ENCODE measurements at regions of chr6 and their contacts with region 1.

Region 1: GRCh38 chr6:158913620-158914019 is 86.4 kb downstream of the RSPH3 start:
- DNase-seq: no peak
- ATAC-seq: no peak
- H3K4me3 ChIP-seq: no peak overlapping the region
- H3K4me3 Mint-ChIP-seq: no peak overlapping the region
- H3K27ac ChIP-seq: no peak overlapping the region
- H3K27ac Mint-ChIP-seq: no peak overlapping the region
- H3K4me1 ChIP-seq: peaks cover 31 to 54% of the 10 kb centered on the region in 2 experiments
- H3K4me1 Mint-ChIP-seq: peaks cover 59 to 71% (median 65%) of the 10 kb centered on the region in 3 donors
- H3K27me3 ChIP-seq: no peaks in the 10 kb centered on the region
- H3K27me3 Mint-ChIP-seq: no peaks in the 10 kb centered on the region

Region 2: DNA sequence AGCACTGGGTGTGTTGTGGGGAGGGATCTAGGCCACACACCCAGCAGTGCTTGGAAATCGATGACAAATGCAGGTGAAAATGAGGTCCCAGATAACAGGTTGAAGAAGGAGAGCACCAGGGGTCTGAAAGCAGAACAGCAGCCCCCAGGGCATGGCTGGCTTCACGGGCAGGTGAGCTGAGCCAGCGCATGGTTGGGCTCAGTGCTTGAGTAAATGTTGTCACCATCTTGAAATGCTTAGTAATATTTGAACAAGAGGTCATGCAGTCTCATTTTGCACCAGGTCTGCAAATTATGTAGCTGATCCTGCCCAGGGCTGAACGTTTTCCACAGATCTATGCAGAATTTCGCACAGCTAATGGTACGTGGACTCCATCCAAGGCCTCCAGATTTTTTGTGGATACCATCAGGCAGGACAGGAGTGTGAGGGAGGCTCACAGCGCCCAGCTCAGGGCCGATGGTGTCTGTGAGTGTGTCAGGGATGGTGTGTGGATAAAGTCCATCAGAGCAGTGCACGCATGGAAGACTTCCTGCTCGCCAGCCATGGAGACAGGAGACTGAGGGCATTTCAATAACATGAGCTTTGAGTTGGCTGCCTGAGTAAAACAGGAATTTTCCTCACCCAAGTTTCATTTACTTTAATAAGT is 1143.7 kb before region 1 on chr6:
- CTCF ChIA-PET with region 1: interaction called in 1 of 2 experiments, 10 read pairs
- POLR2A ChIA-PET with region 1: no interaction called
- DNase-seq: no peak
- ATAC-seq: no peak
- H3K4me3 ChIP-seq: no peak overlapping the region
- H3K4me3 Mint-ChIP-seq: no peak overlapping the region
- H3K27ac ChIP-seq: no peak overlapping the region
- H3K27ac Mint-ChIP-seq: no peak overlapping the region
- H3K4me1 ChIP-seq: peaks cover 19 to 27% of the 10 kb centered on the region in 2 experiments
- H3K4me1 Mint-ChIP-seq: peaks cover 44 to 54% (median 53%) of the 10 kb centered on the region in 3 donors
- H3K27me3 ChIP-seq: peaks cover 0 to 13% of the 10 kb centered on the region in 2 experiments
- H3K27me3 Mint-ChIP-seq: peaks cover 0 to 9% of the 10 kb centered on the region in 2 donors

Region 3: DNA sequence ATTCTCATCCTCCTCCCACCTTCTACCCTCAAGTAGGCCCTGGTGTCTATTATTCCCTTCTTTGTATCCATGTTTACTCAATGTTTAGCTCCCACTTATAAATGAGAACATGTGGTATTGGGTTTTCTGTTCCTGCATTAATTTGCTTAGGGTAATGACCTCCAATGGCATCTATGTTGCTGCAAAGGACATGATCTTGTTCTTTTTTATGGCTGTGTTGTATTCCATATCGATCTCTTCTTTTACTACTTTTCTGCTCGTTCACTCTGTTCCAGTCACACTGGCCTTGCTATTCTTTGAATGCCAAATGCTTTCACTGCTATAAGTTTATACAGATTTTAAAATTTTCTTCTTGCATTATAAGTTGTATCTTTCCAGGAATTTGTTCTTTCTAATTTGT is 28.7 kb after region 1 on chr6:
- CTCF ChIA-PET with region 1: no interaction called
- POLR2A ChIA-PET with region 1: interaction called in 1 of 2 experiments, 12 read pairs
- DNase-seq: no peak
- ATAC-seq: no peak
- H3K4me3 ChIP-seq: no peak overlapping the region
- H3K4me3 Mint-ChIP-seq: no peak overlapping the region
- H3K27ac ChIP-seq: no peak overlapping the region
- H3K27ac Mint-ChIP-seq: no peak overlapping the region
- H3K4me1 ChIP-seq: peaks cover 0 to 13% of the 10 kb centered on the region in 2 experiments
- H3K4me1 Mint-ChIP-seq: peaks cover 12 to 19% (median 13%) of the 10 kb centered on the region in 3 donors
- H3K27me3 ChIP-seq: peaks cover 0 to 10% of the 10 kb centered on the region in 2 experiments
- H3K27me3 Mint-ChIP-seq: peaks cover 4 to 8% of the 10 kb centered on the region in 2 donors

Measured in T-cell (primary cell).